Activated T-helper 2 cell treated with anti-CD3 and anti-CD28 coated beads, Interferon-gamma antibody, Interleukin-2, Interleukin-4, amounts not matched to agents 10 μg/mL and 5 μg/mL and 100 μg/mL, durations not matched to agents 14 hours and 24 hours and 36 hours (primary cell): ENCODE measurements at regions of chr20 and their contacts with region 1.

Region 1: DNA sequence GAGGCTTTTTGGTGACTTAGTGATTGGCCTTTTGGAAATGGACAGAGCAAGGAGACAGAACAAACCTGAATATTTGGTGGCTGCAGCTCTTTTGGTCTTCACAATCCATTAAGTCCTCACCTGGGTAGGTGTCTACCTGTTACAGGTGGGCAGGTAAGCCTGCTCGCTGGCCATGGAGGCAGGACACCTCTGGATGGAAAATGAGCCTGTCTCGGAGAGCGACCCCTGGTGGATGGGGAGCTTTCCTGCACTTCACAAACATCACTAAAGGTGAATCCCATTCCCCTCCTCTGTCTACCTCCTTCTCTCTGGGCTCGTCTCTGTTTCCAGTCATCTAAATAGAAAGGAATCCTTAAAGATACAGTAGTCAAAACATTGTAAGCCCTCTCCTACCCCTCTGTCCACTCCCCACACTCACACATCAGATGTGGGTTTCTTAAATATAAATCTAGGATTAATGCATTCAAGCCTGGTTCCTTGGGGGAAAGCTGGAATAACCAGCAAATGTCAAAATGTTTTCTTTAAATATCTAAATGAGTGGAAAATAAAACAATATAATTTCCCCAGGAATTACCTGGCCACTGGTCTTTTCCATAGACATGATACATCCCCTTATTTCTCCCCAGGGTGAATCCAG is 304.9 kb downstream of the CDH26 start:
- DNase-seq: peak; percentile 16
- H3K4me3 Mint-ChIP-seq: no peak overlapping the region
- H3K27ac Mint-ChIP-seq: no peak overlapping the region
- H3K4me1 Mint-ChIP-seq: no peaks in the 10 kb centered on the region
- H3K27me3 Mint-ChIP-seq: no peaks in the 10 kb centered on the region

Region 2: GRCh38 chr20:59940174-59940971 is 322.7 kb before region 1 on chr20 and contains the starts of genes FAM217B and PPP1R3D:
- intact Hi-C with region 1: loop called (anchors 10 kb)
- DNase-seq: peak; percentile 90
- H3K4me3 Mint-ChIP-seq: peak within 1 kb of the TSS; percentile 94
- H3K27ac Mint-ChIP-seq: peak within 1 kb of the TSS; percentile 98
- H3K4me1 Mint-ChIP-seq: peaks cover 33% of the 10 kb centered on the region
- H3K27me3 Mint-ChIP-seq: no peaks in the 10 kb centered on the region
- total RNA-seq, gene FAM217B: 27.8 and 28.8 TPM in 2 replicates
- total RNA-seq, gene PPP1R3D: 6.4 and 6.6 TPM in 2 replicates

Region 3: GRCh38 chr20:60191014-60191413 is 72.1 kb before region 1 on chr20:
- intact Hi-C with region 1: no loop called
- DNase-seq: no peak
- H3K4me3 Mint-ChIP-seq: no peak overlapping the region
- H3K27ac Mint-ChIP-seq: no peak overlapping the region
- H3K4me1 Mint-ChIP-seq: no peaks in the 10 kb centered on the region
- H3K27me3 Mint-ChIP-seq: no peaks in the 10 kb centered on the region

Region 4: DNA sequence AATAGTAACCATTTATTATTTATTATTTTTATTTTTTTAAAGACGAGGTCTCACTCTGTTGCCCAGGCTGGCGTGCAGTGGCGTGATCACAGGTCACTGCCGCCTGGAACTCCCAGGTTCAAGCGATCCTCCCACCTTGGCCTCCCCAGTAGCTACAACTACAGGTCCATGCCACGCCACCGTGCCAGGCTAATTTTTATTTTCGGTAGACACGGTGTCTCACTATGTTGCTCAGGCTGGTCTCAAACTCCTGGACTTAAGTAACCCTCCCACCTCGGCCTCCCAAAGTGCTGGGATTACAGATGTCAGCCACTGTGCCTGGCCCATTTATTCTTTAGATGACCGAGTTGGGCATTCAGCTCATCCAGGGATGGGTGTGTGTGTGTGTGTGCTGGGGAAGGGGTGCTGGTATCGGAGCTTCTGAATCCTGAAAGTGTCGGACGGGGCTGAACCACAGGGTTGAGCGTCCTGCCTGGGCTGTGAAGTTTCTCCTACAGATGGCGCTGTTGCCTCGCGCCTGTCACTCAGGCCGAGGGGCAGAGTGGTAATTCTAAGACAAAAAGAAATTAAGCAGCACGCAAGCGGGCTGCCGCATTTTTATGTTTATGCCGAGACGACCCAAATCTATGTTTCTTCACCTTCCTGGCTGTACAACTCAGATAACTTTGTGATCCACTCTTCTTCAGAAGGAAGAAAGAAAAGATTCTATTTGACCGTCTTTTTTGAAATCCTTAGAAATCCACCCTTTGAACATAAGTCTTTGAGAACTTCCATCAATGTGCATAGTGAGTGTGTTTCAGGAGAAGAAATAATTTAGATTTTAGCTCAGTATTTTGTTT is 52.1 kb before region 1 on chr20:
- intact Hi-C with region 1: loop called (anchors 2 kb)
- DNase-seq: peak; percentile 34
- H3K4me3 Mint-ChIP-seq: no peak overlapping the region
- H3K27ac Mint-ChIP-seq: no peak overlapping the region
- H3K4me1 Mint-ChIP-seq: no peaks in the 10 kb centered on the region
- H3K27me3 Mint-ChIP-seq: no peaks in the 10 kb centered on the region